PC-3 (cell line): ENCODE measurements at regions of chr2 and their contacts with region 1.

Region 1: GRCh38 chr2:123165616-123166015 is 859.5 kb upstream of the CNTNAP5 start:
- DNase-seq: no peak
- ATAC-seq: no peak
- H3K4me3 ChIP-seq: no peak overlapping the region
- H3K27ac ChIP-seq: no peak overlapping the region
- H3K4me1 ChIP-seq: no peaks in the 10 kb centered on the region
- H3K27me3 ChIP-seq: no peaks in the 10 kb centered on the region
- CTCF ChIP-seq: no peak

Region 2: DNA sequence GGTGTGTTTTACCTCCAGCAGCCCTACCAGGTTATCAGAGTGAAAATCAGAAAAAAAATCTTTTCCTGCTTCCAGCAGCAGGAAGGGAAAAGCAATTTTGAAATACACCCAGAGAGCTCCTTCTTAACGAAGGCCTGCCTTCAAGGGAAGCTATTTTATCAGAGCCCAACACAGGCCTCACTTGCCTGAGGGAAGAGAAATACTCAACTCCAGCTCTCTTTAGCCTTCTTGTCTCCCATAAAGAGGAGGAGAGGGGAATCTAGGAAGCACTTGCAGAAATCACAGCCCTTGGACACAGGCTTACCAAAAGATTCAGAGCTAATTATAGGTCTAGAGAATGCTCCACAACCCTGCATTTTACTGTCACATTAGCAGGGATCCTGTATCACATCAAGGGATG is 36.7 kb before region 1 on chr2:
- CTCF ChIA-PET with region 1: no interaction called
- POLR2A ChIA-PET with region 1: interaction called, 32 read pairs
- intact Hi-C with region 1: no loop called
- DNase-seq: no peak
- ATAC-seq: no peak
- H3K4me3 ChIP-seq: no peak overlapping the region
- H3K27ac ChIP-seq: no peak overlapping the region
- H3K4me1 ChIP-seq: no peaks in the 10 kb centered on the region
- H3K27me3 ChIP-seq: no peaks in the 10 kb centered on the region
- CTCF ChIP-seq: no peak

Region 3: DNA sequence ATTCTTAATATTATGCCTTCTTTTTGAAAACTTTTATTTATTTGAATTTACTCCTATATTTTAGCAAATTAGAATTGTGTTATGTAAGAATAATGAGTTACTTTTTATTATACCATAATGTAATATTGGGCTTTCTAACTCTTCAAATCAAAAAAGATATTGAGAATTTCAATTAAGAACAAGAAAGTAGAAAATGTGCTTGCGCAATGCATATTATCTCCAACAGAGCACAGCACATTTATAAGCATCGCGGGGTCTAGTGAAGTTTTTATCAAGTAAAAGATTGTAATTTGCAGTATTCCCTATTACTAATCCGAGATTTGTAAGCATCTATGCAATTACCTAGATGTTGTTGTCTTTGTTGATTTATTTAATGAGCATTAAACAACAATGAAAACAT is 30.3 kb after region 1 on chr2:
- CTCF ChIA-PET with region 1: no interaction called
- POLR2A ChIA-PET with region 1: no interaction called
- intact Hi-C with region 1: no loop called
- DNase-seq: no peak
- ATAC-seq: no peak
- H3K4me3 ChIP-seq: no peak overlapping the region
- H3K27ac ChIP-seq: no peak overlapping the region
- H3K4me1 ChIP-seq: no peaks in the 10 kb centered on the region
- H3K27me3 ChIP-seq: no peaks in the 10 kb centered on the region
- CTCF ChIP-seq: no peak

Region 4: DNA sequence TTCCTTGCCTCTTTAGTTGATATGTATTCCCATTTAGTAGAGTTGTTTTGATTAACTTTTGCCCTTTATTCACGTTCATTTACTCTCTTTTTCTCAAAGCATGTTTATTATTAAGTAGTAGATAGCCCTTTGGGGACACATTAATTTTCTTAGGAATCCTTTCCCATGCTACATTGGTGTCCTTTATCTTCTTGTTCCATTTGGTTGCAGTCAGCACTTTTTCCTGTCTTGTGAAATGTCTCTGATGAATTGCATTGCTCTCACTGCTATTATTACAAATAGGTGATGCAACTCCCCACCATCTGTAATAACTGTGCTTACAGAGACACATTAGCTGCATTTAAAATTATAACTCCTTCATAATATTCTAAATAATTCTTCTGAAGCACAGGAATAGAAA is 431.0 kb after region 1 on chr2:
- CTCF ChIA-PET with region 1: no interaction called
- POLR2A ChIA-PET with region 1: no interaction called
- intact Hi-C with region 1: no loop called
- DNase-seq: no peak
- ATAC-seq: no peak
- H3K4me3 ChIP-seq: no peak overlapping the region
- H3K27ac ChIP-seq: no peak overlapping the region
- H3K4me1 ChIP-seq: no peaks in the 10 kb centered on the region
- H3K27me3 ChIP-seq: no peaks in the 10 kb centered on the region
- CTCF ChIP-seq: no peak